ENCODE measurements at regions of chr9 and their contacts with region 1.

Region 1: GRCh38 chr9:92293452-92294296 is at the start of gene IARS1:
- DNase-seq: peak; percentile 100
- H3K4me3 Mint-ChIP-seq: peak within 1 kb of the TSS; percentile 88
- H3K27ac Mint-ChIP-seq: peak within 1 kb of the TSS; percentile 100
- H3K4me1 Mint-ChIP-seq: peaks cover 55% of the 10 kb centered on the region
- H3K27me3 Mint-ChIP-seq: no peaks in the 10 kb centered on the region
- total RNA-seq, gene IARS1: 226 and 234 TPM in 2 replicates

Region 2: DNA sequence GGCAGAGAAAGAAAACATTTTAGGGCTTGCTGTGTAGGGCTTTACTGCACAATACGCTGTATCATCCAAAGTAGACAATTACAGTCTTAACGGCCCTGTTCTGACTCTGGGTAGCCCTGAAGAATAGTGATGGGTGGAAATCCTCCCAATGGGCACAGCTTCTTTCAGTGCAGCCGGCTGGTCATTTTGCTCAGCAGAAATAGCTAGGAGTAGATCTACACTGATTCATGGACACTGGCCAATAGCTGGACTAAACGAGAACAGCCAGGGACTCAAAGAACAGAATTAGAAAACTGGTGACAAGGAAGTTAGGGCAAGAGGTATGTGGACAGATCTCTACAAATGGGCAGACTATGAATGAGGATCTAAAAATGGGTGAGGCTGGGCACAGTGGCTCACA is 69.5 kb before region 1 on chr9:
- intact Hi-C with region 1: no loop called
- DNase-seq: no peak
- H3K4me3 Mint-ChIP-seq: no peak overlapping the region
- H3K27ac Mint-ChIP-seq: peak overlapping the region; percentile 31
- H3K4me1 Mint-ChIP-seq: no peaks in the 10 kb centered on the region
- H3K27me3 Mint-ChIP-seq: no peaks in the 10 kb centered on the region

Region 3: DNA sequence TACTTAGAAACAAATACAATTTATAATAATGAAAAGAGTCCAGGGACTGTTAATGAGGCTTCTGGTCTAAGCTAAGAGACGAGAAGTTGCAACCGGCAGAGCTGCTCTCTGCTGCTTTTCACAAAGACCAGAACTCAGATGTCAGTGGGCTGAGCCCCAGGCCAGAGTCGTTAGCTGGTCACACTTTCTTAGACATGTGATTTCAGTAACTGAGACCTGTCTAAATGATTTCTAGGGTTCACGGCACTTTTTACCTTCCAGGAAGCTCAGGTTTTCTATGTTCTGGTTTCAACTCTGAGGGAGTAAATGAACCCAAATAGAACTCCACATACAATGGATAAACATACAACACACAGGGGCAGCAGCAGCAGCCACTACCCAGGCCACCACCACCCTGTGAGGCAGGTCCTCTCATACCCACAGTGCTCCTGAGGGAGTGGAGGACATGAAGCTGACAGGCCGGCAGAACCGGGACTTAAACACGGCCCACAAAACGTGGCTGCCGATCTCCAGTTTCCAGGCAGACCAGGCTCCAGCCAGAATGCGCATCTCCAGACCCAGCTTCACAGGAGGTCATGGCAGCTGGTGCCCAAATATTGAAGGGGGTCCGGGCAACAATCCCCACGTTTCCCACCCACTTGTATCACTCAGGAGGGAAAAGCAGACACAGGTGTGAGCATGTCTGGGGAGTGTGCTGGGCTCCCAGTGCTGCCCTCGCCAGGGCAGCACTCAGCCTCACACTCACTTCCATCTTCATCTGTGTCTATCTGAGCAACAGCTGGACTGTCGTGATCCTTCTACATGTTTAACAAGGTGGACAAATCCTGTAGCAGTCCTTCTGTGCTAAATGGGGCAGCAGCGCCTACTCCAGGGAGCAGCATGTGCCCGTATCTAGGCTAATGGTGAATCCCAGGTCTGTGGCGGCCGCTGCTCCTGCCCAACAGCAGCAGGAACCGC is 39.0 kb before region 1 on chr9:
- intact Hi-C with region 1: loop called (anchors 5 kb)
- DNase-seq: no peak
- H3K4me3 Mint-ChIP-seq: no peak overlapping the region
- H3K27ac Mint-ChIP-seq: no peak overlapping the region
- H3K4me1 Mint-ChIP-seq: peaks cover 3% of the 10 kb centered on the region
- H3K27me3 Mint-ChIP-seq: no peaks in the 10 kb centered on the region

Region 4: DNA sequence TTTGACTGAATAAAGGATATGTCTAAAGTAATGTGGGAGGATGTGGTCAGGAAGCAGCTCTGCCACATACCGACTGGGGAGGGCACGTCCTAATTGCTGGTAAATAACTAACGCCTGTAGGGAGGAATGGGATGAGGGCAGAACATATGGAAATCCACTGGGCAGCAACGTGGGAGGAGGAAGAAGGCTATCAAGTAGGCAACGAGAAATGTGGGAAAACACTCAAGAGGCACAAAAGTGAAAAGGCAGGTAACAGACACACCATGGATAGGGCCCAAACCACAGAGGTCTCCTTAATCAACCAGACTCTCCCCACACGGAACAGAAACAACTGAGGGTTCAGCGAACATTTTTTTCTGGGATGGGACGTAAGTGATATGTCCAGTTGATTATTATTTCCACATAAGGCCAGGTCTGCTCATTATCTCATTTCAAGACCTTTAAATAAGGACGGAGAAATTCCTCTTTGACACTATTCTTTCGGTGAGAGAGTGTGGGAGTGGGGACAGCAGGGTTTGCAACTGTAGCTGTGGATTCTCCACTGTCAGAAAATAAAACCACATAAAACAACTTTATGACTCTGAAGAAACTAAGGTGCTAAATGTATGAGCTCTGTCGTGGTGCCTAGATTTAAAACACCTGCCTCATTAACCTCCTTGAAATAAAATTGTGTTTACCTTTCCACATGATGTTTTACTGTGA is 17.2 kb before region 1 on chr9:
- intact Hi-C with region 1: loop called (anchors 2 kb)
- DNase-seq: peak; percentile 58
- H3K4me3 Mint-ChIP-seq: peak overlapping the region; percentile 75
- H3K27ac Mint-ChIP-seq: peak overlapping the region; percentile 87
- H3K4me1 Mint-ChIP-seq: peaks cover 20% of the 10 kb centered on the region
- H3K27me3 Mint-ChIP-seq: no peaks in the 10 kb centered on the region

Region 5: DNA sequence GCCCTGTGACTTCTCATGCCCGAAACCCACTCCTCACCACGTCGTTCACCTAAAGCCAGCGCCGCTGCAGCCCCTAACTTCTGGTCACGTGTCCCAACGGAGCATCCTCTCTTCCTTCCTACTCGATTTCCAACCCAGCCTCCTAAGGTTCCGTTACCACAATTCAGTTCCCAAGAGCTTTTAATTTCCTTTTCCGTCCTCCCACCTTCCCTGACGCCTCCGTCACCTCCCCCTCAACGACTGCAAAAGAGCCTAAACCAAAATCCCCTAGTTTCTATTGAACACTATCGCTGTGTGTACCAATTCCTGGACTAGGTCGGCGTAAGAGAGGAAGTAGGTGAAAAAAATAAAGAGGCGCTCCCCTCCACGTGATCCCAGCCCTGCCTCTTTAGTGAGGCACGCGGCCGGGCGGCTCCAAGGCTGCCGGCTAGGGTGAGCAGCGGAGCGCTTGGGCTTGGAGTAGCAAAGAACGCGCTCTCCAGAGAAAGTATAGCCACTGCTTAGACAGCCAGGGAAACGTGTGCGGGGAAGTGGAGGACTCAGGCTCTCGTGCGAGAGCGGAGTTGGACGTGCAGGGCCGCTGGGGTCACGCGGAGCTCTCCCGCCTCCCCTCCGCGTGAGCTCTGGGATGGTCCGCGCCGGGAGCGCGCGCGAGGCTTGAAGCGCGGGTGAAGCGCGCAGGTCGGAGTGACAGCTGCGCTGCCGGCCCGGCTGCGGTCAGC is 31.8 kb after region 1 on chr9 and contains the starts of genes CENPP and NOL8:
- intact Hi-C with region 1: loop called (anchors 1 kb)
- DNase-seq: peak; percentile 95
- H3K4me3 Mint-ChIP-seq: peak within 1 kb of the TSS; percentile 98
- H3K27ac Mint-ChIP-seq: peak within 1 kb of the TSS; percentile 97
- H3K4me1 Mint-ChIP-seq: peaks cover 31% of the 10 kb centered on the region
- H3K27me3 Mint-ChIP-seq: no peaks in the 10 kb centered on the region
- total RNA-seq, gene CENPP: 26.9 and 27.5 TPM in 2 replicates
- total RNA-seq, gene NOL8: 84.9 and 90.9 TPM in 2 replicates

Region 6: GRCh38 chr9:92501671-92502393 is 208.2 kb after region 1 on chr9:
- intact Hi-C with region 1: no loop called
- DNase-seq: peak; percentile 58
- H3K4me3 Mint-ChIP-seq: no peak overlapping the region
- H3K27ac Mint-ChIP-seq: no peak overlapping the region
- H3K4me1 Mint-ChIP-seq: peaks cover under 1% of the 10 kb centered on the region
- H3K27me3 Mint-ChIP-seq: no peaks in the 10 kb centered on the region

Region 7: GRCh38 chr9:92634712-92635605 is 341.3 kb after region 1 on chr9:
- intact Hi-C with region 1: loop called (anchors 10 kb)
- DNase-seq: peak; percentile 90
- H3K4me3 Mint-ChIP-seq: no peak overlapping the region
- H3K27ac Mint-ChIP-seq: no peak overlapping the region
- H3K4me1 Mint-ChIP-seq: peaks cover 8% of the 10 kb centered on the region
- H3K27me3 Mint-ChIP-seq: no peaks in the 10 kb centered on the region

Region 8: GRCh38 chr9:92917176-92917800 is 623.6 kb after region 1 on chr9:
- intact Hi-C with region 1: no loop called
- DNase-seq: no peak
- H3K4me3 Mint-ChIP-seq: no peak overlapping the region
- H3K27ac Mint-ChIP-seq: no peak overlapping the region
- H3K4me1 Mint-ChIP-seq: peaks cover 1% of the 10 kb centered on the region
- H3K27me3 Mint-ChIP-seq: peaks cover 8% of the 10 kb centered on the region

Region 9: DNA sequence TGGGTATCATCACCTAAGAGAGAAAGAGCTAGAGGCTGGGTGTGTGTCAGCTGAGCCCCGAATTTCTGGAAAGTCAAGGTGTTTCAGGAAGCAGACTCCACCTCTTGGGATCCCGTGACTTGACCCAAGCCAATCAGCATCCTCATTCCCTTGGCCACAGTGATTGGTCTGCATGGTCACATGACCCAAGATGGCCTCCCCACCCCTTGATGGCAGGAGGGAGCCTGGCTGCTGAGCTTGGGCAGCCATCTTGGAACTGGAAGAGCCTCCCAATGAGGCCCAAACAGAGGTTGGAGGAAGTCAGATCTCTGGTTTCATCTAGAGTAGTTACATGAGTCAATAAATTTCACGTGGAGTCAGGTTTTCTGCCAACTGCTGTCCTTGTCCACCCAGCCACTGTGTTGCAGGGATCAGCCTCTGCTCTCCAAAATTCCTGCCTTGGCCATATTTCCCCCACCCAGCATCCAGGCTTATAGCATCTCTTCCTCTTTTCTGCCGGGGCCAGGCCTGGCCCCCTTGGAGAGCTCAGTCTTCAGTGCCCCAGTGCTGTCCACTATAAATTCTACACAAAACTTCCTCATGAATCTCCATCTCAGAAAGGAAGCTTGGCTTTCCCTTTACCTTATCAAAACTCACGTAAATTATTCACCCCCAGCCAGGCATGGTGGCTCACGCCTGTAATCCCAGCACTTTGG is 747.6 kb after region 1 on chr9:
- intact Hi-C with region 1: no loop called
- DNase-seq: no peak
- H3K4me3 Mint-ChIP-seq: no peak overlapping the region
- H3K27ac Mint-ChIP-seq: peak overlapping the region; percentile 65
- H3K4me1 Mint-ChIP-seq: peaks cover 26% of the 10 kb centered on the region
- H3K27me3 Mint-ChIP-seq: no peaks in the 10 kb centered on the region

Region 10: GRCh38 chr9:94166237-94166963 is 1872.7 kb after region 1 on chr9:
- intact Hi-C with region 1: loop called (anchors 5 kb)
- DNase-seq: peak; percentile 98
- H3K4me3 Mint-ChIP-seq: peak overlapping the region; percentile 90
- H3K27ac Mint-ChIP-seq: peak overlapping the region; percentile 88
- H3K4me1 Mint-ChIP-seq: peaks cover 37% of the 10 kb centered on the region
- H3K27me3 Mint-ChIP-seq: no peaks in the 10 kb centered on the region

Measured in activated CD4-positive, alpha-beta T cell treated with anti-CD3 and anti-CD28 coated beads, Interleukin-2, amount 10 ng/mL, durations not matched to agents 24 days and 14 days (primary cell).